ENCODE measurements at regions of chr19 and their contacts with region 1.

Region 1: DNA sequence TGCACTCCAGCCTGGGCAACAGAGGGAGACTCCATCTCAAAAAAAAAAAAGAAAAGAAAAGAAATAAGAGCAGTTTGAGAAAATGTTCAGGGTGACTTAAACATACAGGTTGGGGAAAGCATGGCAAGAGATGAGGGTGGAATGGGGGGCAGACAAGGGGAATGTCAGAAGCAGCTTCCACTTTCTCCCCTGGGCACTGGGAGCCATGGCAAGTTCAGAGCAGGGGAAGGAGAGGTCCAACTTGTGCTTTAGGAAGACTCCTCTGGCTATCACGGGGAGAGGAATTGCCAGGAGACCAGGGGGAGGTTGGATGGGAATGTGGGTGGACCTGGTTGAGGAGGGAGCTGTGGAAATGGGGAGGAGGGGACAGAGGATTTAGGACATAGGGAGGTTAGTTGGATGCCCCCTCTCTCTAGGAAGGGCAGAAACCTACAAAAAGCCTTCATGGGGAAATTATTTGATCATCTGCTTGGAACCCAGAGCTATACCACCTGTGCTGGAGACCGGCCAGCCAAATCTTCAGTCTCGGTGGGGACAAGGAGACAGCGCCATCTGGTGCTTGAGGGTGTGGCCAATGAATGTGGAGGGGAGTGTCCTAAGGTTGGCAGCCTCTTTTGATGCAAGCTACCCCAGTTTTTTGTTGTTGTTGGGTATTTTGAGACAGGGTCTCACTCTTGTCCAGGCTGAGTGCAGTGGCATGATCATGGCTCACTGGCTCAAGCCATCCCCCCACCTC is 7.3 kb upstream of the STRN4 start:
- DNase-seq: peak in 23 of 42 donors; percentile 29 to 75 (median 60)

Region 2: GRCh38 chr19:46813839-46814363 is 60.3 kb after region 1 on chr19:
- intact Hi-C with region 1: no loop called
- DNase-seq: peak in 6 of 42 donors; percentile 8 to 45 (median 24)

Region 3: DNA sequence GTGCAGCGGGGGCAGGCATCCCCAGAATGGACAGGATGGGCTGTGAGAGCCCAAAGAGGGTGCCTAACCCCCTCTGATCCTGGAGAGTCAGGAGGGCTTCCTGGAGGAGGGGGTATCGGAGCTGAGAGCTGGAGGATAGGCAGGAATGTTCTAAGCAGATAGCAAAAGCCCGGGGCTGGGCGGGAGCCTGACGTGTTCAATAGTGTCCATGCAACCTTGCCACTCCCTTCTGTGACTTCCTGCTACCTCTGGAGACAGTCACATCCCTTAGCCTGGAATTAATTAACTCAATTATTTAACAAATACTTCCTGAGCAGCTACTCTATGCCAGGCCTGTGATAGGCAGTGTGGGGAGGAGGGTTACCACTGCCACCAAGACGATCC is 86.2 kb after region 1 on chr19:
- intact Hi-C with region 1: loop called (anchors 2 kb)
- DNase-seq: no peak

Measured in head of caudate nucleus (tissue), 42 donors.